Activated CD4-positive, alpha-beta memory T cell treated with anti-CD3 and anti-CD28 coated beads, Interleukin-2, amount 10 ng/mL, durations not matched to agents 7 days and 5 days (primary cell): ENCODE measurements at regions of chr11 and their contacts with region 1.

Region 1: GRCh38 chr11:95231127-95231880 is at the start of gene SESN3:
- DNase-seq: peak; percentile 99
- H3K4me3 Mint-ChIP-seq: no peak within 1 kb of the TSS
- H3K27ac Mint-ChIP-seq: peak within 1 kb of the TSS; percentile 79
- H3K4me1 Mint-ChIP-seq: peaks cover 36% of the 10 kb centered on the region
- H3K27me3 Mint-ChIP-seq: peaks cover 12% of the 10 kb centered on the region
- total RNA-seq, gene SESN3: 23.2 to 24.6 TPM

Region 2: GRCh38 chr11:95254131-95254704 is 22.9 kb after region 1 on chr11:
- CTCF ChIA-PET with region 1: interaction called, 23 read pairs
- POLR2A ChIA-PET with region 1: interaction called, 75 read pairs
- DNase-seq: peak; percentile 84
- H3K4me3 Mint-ChIP-seq: peak overlapping the region; percentile 76
- H3K27ac Mint-ChIP-seq: peak overlapping the region; percentile 78
- H3K4me1 Mint-ChIP-seq: peaks cover 29% of the 10 kb centered on the region
- H3K27me3 Mint-ChIP-seq: no peaks in the 10 kb centered on the region

Region 3: DNA sequence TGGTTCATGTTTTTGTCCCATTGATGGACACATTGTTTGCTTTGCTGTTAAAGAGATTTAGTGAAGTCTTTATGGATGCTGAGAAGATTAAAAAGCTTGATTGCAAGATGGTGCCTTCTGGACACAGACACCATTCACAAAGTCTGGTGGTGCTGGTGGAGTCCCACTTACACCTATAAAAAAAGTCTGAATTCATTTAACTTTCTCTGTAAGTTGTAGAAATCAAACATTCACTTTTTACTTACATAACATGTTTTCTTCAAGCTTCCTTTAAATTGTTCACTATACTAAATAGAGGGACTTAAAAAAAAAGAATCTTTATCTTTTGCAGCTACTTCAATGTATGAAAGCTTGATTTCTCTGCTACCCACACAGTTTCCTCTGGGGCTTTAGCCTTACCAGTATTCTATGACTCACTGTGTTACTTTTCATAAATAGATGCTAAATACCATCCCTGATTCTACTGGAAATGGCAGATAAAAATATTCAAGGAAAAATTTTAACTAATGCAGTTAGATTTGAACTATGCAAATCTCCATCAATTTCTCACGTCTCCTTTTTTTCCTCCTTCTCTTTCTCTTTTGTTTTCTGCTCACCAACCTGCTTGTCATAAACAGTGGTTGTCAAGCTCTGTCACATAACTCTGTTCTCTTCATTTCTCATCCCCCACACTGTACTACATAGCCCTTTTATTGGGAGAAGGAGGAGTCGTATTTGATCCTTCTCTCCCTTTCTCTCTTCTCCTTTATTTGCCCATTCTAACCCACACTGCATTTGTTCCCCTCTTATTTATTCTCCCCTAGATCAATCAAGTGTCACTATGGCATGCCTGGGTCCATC is 468.5 kb after region 1 on chr11:
- CTCF ChIA-PET with region 1: interaction called, 14 read pairs
- POLR2A ChIA-PET with region 1: interaction called, 22 read pairs
- DNase-seq: no peak
- H3K4me3 Mint-ChIP-seq: peak overlapping the region; percentile 53
- H3K27ac Mint-ChIP-seq: peak overlapping the region; percentile 76
- H3K4me1 Mint-ChIP-seq: peaks cover 43% of the 10 kb centered on the region
- H3K27me3 Mint-ChIP-seq: no peaks in the 10 kb centered on the region